Transverse colon (tissue), 4 donors: ENCODE measurements at regions of chrX and their contacts with region 1.

Region 1: DNA sequence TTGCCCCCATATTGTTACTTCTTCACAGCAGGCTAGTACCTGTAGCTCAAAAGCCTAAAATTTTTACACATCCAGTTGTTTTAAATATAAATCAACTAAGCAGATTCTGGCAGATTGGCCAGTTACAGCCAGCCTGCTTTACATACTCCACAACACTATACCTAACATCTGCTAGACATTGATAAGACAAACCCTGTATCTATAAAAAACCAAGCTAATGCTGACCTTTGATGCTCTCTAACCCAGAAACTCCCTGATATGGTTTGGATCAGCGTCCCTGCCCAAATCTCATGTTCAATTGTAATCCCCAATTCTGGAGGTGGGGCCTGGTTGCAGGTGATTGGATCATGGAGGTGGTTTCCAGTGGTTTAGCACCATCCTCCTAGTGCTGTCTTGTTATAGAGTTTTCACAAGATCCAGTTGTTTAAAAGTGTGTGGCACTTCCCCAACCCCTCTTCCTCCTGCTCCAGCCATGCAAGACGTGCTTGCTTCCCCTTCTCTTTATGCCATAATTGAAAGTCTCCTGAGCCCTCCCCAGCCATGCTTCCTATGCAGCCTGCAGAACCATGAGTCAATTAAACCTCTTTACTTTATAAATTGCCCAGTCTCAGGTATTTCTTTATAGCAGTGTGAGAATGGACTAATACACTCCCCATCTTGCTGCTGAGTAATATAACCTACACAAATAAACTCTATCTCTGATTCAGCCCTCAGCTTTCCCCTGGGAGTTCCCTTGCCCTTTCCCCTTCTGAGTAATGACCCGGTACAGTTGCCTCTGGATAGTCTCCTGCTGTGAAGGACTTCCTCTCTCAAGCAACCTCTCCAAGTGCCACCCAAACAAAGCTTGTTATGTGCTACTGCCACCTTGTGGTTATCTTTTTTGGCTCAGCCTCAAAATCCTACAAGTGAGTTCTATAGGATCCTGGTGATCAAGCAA is 39.6 kb downstream of the ZCCHC13 start:
- DNase-seq: peak; percentile 63
- H3K4me3 ChIP-seq: no peak overlapping the region
- H3K27ac ChIP-seq: peak overlapping the region in 1 of 4 donors; percentile 16
- H3K4me1 ChIP-seq: peaks cover 0 to 4% (median 2%) of the 10 kb centered on the region in 4 donors
- H3K27me3 ChIP-seq: no peaks in the 10 kb centered on the region
- CTCF ChIP-seq: peak; percentile 47 to 70 (median 51)
- EP300 ChIP-seq: no peak
- POLR2A ChIP-seq: no peak

Region 2: GRCh38 chrX:73850124-73851013 is 493.2 kb before region 1 on chrX:
- in situ Hi-C with region 1: loop called (anchors 5 to 25 kb)
- intact Hi-C with region 1: loop called (anchors 10 kb)
- DNase-seq: peak; percentile 46
- H3K4me3 ChIP-seq: peak overlapping the region in 1 of 4 donors; percentile 17
- H3K27ac ChIP-seq: peak overlapping the region in 1 of 4 donors; percentile 71
- H3K4me1 ChIP-seq: peaks cover 0 to 10% (median 0%) of the 10 kb centered on the region in 4 donors
- H3K27me3 ChIP-seq: no peaks in the 10 kb centered on the region
- CTCF ChIP-seq: no peak
- EP300 ChIP-seq: no peak
- POLR2A ChIP-seq: no peak

Region 3: GRCh38 chrX:74133156-74133796 is 210.3 kb before region 1 on chrX:
- in situ Hi-C with region 1: loop called in 1 of 4 experiments (anchors 25 kb)
- intact Hi-C with region 1: no loop called
- DNase-seq: no peak
- H3K4me3 ChIP-seq: no peak overlapping the region
- H3K27ac ChIP-seq: no peak overlapping the region
- H3K4me1 ChIP-seq: no peaks in the 10 kb centered on the region
- H3K27me3 ChIP-seq: no peaks in the 10 kb centered on the region
- CTCF ChIP-seq: peak; percentile 50 to 76 (median 52)
- EP300 ChIP-seq: no peak
- POLR2A ChIP-seq: no peak